Posterior cingulate gyrus (tissue), 11 donors: ENCODE measurements at regions of chr9 and their contacts with region 1.

Region 1: DNA sequence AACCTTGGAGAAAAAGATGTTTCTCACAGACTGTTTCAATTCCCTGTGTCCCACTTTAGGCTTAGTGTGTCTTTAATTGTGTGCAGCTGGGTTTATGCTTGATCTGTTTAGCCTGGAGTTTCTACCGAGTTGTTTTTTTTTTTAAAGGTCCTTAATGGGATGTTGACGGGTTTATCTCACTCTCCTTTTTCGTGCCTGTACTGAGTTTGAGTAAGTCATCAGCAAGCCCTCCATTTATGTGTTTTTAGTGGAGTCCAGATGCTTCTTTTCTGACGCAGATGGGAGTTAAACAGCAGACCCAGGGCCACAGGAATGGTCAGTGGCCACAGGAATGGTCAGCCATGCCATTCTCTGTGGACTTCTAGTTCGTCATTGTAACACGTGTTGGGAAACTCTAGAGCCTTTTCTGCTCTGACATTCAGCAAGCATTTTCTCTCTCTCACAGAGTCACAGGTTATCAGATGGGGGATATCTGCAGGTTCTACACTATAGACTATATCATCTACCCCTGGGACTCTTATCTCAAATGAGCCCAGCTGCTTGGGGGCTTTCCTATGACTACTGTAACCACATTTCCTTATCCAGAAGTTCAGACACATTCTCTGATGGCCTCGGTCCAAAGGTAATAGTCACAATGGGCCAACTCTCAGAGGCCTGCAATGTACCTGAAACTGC is 190.5 kb downstream of the TTLL11 start:
- DNase-seq: no peak

Region 2: GRCh38 chr9:121839726-121840500 is 62.7 kb before region 1 on chr9:
- intact Hi-C with region 1: loop called (anchors 10 kb)
- DNase-seq: no peak

Region 3: DNA sequence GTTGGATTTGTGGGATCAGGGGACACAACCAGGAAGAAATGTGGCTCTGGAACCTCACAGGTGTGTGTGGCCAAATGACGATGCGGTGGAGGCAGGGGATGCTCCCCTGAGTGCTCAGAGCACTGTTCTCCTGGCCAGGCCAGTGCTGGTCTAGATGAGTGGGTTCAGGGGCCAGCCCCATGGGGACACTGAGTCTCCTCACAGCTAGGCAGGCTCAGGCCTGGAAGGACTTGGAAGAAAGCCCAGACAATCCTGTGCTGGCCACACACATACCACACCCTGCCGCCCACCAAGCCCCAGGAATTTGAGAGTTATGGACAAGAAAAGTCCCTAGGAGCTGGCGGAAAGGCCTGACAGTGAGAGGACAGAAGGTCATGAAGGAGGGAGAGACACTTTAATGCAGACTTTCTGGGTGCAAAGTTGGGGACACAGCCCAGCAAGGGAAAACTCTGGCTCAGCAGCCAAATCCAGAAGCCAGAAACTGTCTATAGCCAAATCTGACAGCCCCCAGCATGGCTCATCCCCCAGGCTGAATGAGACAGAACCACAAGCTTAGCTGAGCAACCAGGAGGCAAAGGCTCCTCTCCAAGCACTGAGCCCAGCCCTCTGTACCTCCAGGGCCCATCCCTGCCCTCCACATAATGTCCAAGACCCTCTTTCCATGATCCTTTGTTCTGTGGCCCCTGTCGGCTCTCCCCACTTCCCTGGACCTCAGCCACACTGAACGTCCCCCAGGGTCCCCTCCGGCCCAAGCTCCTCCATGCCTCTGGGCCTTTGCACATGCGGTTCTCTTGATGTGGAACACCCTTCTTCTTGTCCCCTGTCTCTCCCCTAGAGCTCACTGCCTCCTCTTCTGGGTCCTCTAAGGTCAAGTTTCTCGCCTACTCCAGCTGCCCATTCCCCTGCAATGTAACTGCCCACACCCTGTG is 303.8 kb after region 1 on chr9:
- intact Hi-C with region 1: no loop called
- DNase-seq: peak in 2 of 10 donors; percentile 35 to 45